Uterus (tissue), 4 donors: ENCODE measurements at regions of chr10 and their contacts with region 1.

Region 1: GRCh38 chr10:34689053-34689452 is 126.0 kb downstream of the PARD3 start:
- DNase-seq: no peak
- H3K4me3 ChIP-seq: no peak overlapping the region
- H3K27ac ChIP-seq: peak overlapping the region in 1 of 2 donors; percentile 26
- H3K4me1 ChIP-seq: peaks cover 0 to 9% of the 10 kb centered on the region in 2 donors
- H3K27me3 ChIP-seq: no peaks in the 10 kb centered on the region
- CTCF ChIP-seq: no peak
- POLR2A ChIP-seq: no peak

Region 2: GRCh38 chr10:34723750-34724149 is 34.7 kb after region 1 on chr10:
- intact Hi-C with region 1: no loop called
- DNase-seq: peak; percentile 33 to 47
- H3K4me3 ChIP-seq: no peak overlapping the region
- H3K27ac ChIP-seq: no peak overlapping the region
- H3K4me1 ChIP-seq: peaks cover 0 to 6% of the 10 kb centered on the region in 2 donors
- H3K27me3 ChIP-seq: no peaks in the 10 kb centered on the region
- CTCF ChIP-seq: peak; percentile 54 to 68 (median 60)
- POLR2A ChIP-seq: no peak

Region 3: GRCh38 chr10:34815185-34816084 is 126.4 kb after region 1 on chr10 and contains the start of gene PARD3:
- intact Hi-C with region 1: loop called (anchors 10 kb)
- DNase-seq: peak; percentile 60 to 66
- H3K4me3 ChIP-seq: peak within 1 kb of the TSS; percentile 56 to 94
- H3K27ac ChIP-seq: peak within 1 kb of the TSS; percentile 88 to 95
- H3K4me1 ChIP-seq: peaks cover 4 to 13% of the 10 kb centered on the region in 2 donors
- H3K27me3 ChIP-seq: no peaks in the 10 kb centered on the region
- CTCF ChIP-seq: peak in 1 of 4 experiments; percentile 8
- POLR2A ChIP-seq: peak in 1 of 2 donors; percentile 12
- total RNA-seq, gene PARD3: 42.1 to 96.1 (median 51.5) TPM

Region 4: GRCh38 chr10:35827783-35828182 is 1138.7 kb after region 1 on chr10:
- intact Hi-C with region 1: no loop called
- DNase-seq: no peak
- H3K4me3 ChIP-seq: no peak overlapping the region
- H3K27ac ChIP-seq: no peak overlapping the region
- H3K4me1 ChIP-seq: no peaks in the 10 kb centered on the region
- H3K27me3 ChIP-seq: no peaks in the 10 kb centered on the region
- CTCF ChIP-seq: no peak
- POLR2A ChIP-seq: no peak